Natural killer cell (primary cell): ENCODE measurements at regions of chr3 and their contacts with region 1.

Region 1: GRCh38 chr3:120147072-120147871 is 53.0 kb upstream of the GSK3B start:
- DNase-seq: peak in 1 of 2 donors; percentile 80
- ATAC-seq: peak in 2 of 3 donors; percentile 64 to 75
- H3K4me3 ChIP-seq: no peak overlapping the region
- H3K4me3 Mint-ChIP-seq: no peak overlapping the region
- H3K27ac ChIP-seq: no peak overlapping the region
- H3K27ac Mint-ChIP-seq: no peak overlapping the region
- H3K4me1 ChIP-seq: no peaks in the 10 kb centered on the region
- H3K4me1 Mint-ChIP-seq: no peaks in the 10 kb centered on the region
- H3K27me3 ChIP-seq: no peaks in the 10 kb centered on the region
- H3K27me3 Mint-ChIP-seq: no peaks in the 10 kb centered on the region
- CTCF ChIP-seq: no peak

Region 2: GRCh38 chr3:119819806-119820205 is 327.5 kb before region 1 on chr3:
- intact Hi-C with region 1: loop called (anchors 1 kb)
- DNase-seq: no peak
- ATAC-seq: no peak
- H3K4me3 ChIP-seq: no peak overlapping the region
- H3K4me3 Mint-ChIP-seq: no peak overlapping the region
- H3K27ac ChIP-seq: no peak overlapping the region
- H3K27ac Mint-ChIP-seq: no peak overlapping the region
- H3K4me1 ChIP-seq: no peaks in the 10 kb centered on the region
- H3K4me1 Mint-ChIP-seq: peaks cover 0 to 5% of the 10 kb centered on the region in 2 donors
- H3K27me3 ChIP-seq: no peaks in the 10 kb centered on the region
- H3K27me3 Mint-ChIP-seq: no peaks in the 10 kb centered on the region
- CTCF ChIP-seq: no peak

Region 3: GRCh38 chr3:121637922-121638321 is 1490.7 kb after region 1 on chr3:
- intact Hi-C with region 1: no loop called
- DNase-seq: no peak
- ATAC-seq: no peak
- H3K4me3 ChIP-seq: no peak overlapping the region
- H3K4me3 Mint-ChIP-seq: no peak overlapping the region
- H3K27ac ChIP-seq: no peak overlapping the region
- H3K27ac Mint-ChIP-seq: peak overlapping the region in 1 of 2 donors; percentile 18
- H3K4me1 ChIP-seq: no peaks in the 10 kb centered on the region
- H3K4me1 Mint-ChIP-seq: peaks cover 7 to 22% of the 10 kb centered on the region in 2 donors
- H3K27me3 ChIP-seq: no peaks in the 10 kb centered on the region
- H3K27me3 Mint-ChIP-seq: no peaks in the 10 kb centered on the region
- CTCF ChIP-seq: no peak